PC-9 (cell line): ENCODE measurements at regions of chr7 and their contacts with region 1.

Region 1: GRCh38 chr7:73851410-73852234 is 9.3 kb upstream of the METTL27 start:
- DNase-seq: peak; percentile 65 to 99
- H3K4me3 ChIP-seq: peak overlapping the region; percentile 22; the same call in 1 of the 2 replicates
- H3K27ac ChIP-seq: peak overlapping the region; percentile 99
- H3K4me1 ChIP-seq: peaks cover 57% of the 10 kb centered on the region
- H3K27me3 ChIP-seq: no peaks in the 10 kb centered on the region
- CTCF ChIP-seq: 0 out of 2 replicates have a peak, but pooled peaks have one; percentile 11

Region 2: DNA sequence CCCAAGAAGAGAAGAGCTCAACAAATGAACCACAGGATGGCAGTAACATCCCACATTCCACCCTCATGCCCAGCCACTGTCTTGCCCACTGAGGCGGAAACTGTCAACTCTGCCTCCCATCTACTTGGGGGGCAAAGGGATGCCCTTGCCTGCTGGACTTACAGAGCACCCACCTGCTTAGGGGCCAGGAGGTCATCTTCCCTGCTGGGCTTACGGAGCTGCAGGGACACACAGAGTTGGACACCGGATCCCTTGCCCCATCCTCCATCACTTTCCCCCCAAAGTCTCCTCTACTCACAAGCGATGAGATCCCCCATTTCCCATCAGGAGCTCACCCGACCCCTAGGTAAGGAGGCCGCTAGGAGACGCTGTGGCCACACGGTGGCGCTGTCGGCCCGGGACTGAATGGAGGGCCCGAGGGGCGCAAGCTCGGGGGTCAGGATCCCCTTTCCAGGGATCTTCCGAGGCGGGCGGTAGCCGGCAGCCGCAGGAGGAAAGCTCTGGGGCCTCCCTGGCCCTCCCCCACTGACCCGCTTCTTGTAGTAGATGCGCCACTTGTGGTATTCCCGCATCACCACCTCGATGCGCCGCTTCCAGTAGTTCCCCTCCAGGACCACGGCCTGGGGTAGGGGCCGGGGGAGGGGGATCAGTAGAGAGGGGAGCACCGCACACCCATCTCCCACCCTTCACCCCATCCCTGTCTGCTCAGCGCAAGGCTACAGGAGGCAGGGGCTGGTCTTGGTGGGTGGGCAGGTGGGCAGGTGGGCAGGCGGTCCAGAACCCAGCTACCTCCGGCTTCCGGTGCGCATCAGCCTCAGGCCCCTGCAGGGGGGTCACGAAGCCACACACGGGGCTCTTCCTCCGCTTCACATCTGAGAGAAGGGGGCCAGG is 244.6 kb before region 1 on chr7:
- CTCF ChIA-PET with region 1: no interaction called
- POLR2A ChIA-PET with region 1: no interaction called
- intact Hi-C with region 1: loop called (anchors 1 kb)
- DNase-seq: peak in 1 of 2 experiments; percentile 59
- H3K4me3 ChIP-seq: no peak overlapping the region
- H3K27ac ChIP-seq: no peak overlapping the region
- H3K4me1 ChIP-seq: peaks cover 22% of the 10 kb centered on the region
- H3K27me3 ChIP-seq: no peaks in the 10 kb centered on the region
- CTCF ChIP-seq: peak; percentile 95

Region 3: DNA sequence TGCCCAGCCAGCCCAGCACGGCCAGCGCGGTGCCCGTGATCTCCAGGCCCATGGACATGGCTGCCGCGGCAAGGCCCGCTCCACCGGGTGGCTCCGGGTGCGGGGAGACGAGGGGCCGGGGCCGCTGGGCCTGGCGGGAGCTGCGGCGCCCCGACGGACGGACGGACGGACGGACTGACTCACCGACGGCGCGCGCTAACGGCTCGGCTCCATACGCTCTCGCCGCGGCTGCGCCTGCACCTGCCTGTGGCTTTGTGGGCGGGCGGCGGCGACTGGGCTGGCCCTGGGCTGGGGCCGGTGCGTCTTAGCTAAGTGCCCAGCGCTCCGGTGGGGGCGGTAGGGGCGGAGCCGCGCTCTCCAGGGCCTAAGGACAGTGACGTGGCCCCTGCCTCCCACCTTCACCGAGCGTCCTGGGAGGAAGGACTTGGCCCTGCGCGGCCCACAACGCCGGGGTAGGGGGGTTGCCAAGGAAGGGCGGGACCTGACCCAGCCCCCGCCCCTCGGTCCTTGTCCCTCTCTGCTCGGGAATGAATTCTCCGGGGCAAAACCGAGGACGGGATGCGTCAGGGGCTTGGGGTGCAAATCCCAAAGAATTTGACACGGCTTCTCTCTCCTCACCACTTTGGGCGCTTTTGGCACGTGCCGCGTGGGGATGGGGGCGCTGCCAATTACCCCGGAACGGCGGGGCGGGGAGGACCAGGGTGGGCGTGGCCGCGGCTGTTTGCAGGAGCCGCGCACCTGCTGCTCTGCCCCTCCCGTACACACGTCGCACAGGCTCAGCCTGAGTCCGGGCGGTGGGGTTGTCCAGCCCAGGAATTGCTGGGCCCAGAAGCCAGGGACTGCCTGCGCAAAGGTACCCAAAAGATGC is 81.4 kb before region 1 on chr7 and contains the start of gene CLDN3:
- CTCF ChIA-PET with region 1: no interaction called
- POLR2A ChIA-PET with region 1: no interaction called
- intact Hi-C with region 1: loop called (anchors 1 kb)
- DNase-seq: peak; percentile 83 to 97
- H3K4me3 ChIP-seq: peak within 1 kb of the TSS; percentile 66; the same call in 1 of the 2 replicates
- H3K27ac ChIP-seq: peak within 1 kb of the TSS; percentile 58
- H3K4me1 ChIP-seq: peaks cover 23% of the 10 kb centered on the region
- H3K27me3 ChIP-seq: no peaks in the 10 kb centered on the region
- CTCF ChIP-seq: no peak
- total RNA-seq, gene CLDN3: 31.3 and 45.2 TPM in 2 replicates

Region 4: GRCh38 chr7:73786588-73786987 is 65.0 kb before region 1 on chr7:
- CTCF ChIA-PET with region 1: no interaction called
- POLR2A ChIA-PET with region 1: no interaction called
- intact Hi-C with region 1: no loop called
- DNase-seq: no peak
- H3K4me3 ChIP-seq: no peak overlapping the region
- H3K27ac ChIP-seq: no peak overlapping the region
- H3K4me1 ChIP-seq: no peaks in the 10 kb centered on the region; the same call in 1 of the 2 replicates
- H3K27me3 ChIP-seq: no peaks in the 10 kb centered on the region
- CTCF ChIP-seq: no peak

Region 5: DNA sequence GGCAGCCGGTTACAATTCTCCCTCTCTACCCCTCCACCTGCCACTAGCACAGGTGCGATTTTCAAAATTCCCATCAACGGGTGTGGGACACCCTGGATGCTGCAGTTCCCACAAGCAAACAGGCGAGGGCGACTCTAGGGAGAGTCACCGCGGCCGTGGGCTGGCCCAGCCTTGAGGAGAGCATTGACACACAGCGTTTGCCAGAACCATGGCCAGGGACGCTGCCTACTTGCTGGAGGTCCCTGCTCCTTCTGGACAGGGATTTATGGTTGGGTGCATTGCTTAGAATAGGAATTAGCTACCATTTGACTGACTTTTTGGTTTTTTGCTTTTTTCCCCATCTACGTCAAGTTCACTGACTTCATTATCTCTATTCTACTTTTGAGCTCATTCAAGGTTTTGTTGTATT is 39.9 kb before region 1 on chr7:
- CTCF ChIA-PET with region 1: interaction called, 4 read pairs
- POLR2A ChIA-PET with region 1: interaction called, 7 read pairs
- intact Hi-C with region 1: loop called (anchors 1 kb)
- DNase-seq: peak; percentile 55 to 75
- H3K4me3 ChIP-seq: no peak overlapping the region
- H3K27ac ChIP-seq: no peak overlapping the region
- H3K4me1 ChIP-seq: peaks cover 22% of the 10 kb centered on the region
- H3K27me3 ChIP-seq: no peaks in the 10 kb centered on the region
- CTCF ChIP-seq: peak; percentile 89

Region 6: DNA sequence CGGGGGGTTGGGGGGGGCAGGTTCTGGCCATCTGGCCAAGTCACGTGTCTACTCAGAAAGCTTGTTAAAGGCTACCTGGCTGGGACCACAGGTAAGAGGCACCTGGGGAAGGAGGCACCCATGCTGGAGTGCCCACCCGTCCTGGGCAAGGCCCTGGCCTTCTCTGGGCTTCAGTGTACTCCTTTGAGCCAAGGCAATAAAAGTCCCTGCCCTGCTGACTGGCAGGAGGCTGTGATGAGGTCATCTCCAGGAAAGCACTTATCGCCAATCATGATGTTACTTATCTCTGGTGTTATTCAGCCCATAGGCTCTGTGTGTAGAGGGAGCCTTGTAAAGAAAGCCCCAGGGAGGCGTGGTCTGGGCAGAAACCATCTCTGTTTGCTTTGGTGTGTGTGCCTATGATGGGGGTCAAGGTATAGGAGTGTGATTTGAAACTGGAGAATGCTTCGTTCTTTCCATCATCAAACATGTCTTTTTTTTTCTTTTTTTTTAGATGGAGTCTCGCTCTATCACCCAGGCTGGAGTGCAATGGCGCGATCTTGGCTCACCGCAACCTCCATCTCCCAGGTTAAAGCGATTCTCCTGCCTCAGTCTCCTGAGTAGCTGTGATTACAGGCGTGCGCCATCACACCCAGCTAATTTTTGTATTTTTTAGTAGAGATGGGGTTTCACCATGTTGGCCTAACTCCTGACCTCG is 23.4 kb before region 1 on chr7:
- CTCF ChIA-PET with region 1: interaction called, 11 read pairs
- POLR2A ChIA-PET with region 1: interaction called, 49 read pairs
- intact Hi-C with region 1: loop called (anchors 1 kb)
- DNase-seq: peak; percentile 92 to 99
- H3K4me3 ChIP-seq: peak overlapping the region; percentile 58; the same call in 1 of the 2 replicates
- H3K27ac ChIP-seq: peak overlapping the region; percentile 99
- H3K4me1 ChIP-seq: peaks cover 69% of the 10 kb centered on the region
- H3K27me3 ChIP-seq: no peaks in the 10 kb centered on the region
- CTCF ChIP-seq: no peak

Region 7: DNA sequence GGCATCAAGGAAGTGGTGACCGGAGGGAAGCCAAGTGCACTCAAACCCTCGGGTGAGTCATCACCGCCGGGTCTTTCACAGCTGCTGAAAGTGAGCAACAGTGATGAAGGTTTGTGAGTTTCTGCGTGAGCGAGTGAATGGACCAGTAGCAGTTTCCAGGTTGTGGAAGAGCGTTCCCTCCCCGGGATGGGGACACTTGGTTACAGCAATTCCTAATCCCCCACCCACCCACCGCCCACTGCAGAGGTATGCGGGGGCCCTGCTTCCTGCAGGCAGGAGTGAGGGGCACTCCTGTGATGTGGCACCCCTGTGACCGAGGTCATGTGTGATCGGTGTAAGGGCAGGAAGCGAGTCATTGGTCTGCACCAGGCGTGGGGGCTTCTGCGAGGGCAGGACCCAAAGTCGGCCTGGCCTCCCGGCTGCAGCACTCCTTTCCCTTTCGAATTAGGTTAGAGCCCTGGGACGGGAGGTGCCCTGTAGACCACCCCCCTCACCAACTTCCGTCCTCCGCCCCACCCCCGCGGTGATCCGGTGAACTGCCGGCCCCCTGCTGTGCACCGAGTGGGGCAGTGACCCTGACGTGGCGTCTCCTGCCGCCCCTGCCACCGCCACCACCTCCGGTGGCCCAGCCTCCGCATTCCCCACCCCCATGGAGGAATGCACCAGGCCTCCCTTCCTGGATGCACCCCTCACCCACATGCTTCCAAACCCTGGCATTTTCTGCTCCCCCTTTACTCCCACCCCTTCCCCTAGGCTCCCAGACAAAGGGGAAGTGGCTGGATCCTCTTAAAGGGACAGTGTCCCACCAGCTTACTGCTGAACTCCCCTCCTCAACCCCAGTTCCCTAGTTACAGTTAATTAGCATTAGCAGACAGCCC is 242.8 kb after region 1 on chr7:
- CTCF ChIA-PET with region 1: no interaction called
- POLR2A ChIA-PET with region 1: interaction called, 13 read pairs
- intact Hi-C with region 1: no loop called
- DNase-seq: peak; percentile 92 to 94
- H3K4me3 ChIP-seq: peak overlapping the region; percentile 41; the same call in 1 of the 2 replicates
- H3K27ac ChIP-seq: peak overlapping the region; percentile 78
- H3K4me1 ChIP-seq: peaks cover 38% of the 10 kb centered on the region
- H3K27me3 ChIP-seq: no peaks in the 10 kb centered on the region
- CTCF ChIP-seq: no peak